Common myeloid progenitor, CD34-positive (primary cell): ENCODE measurements at regions of chr19 and their contacts with region 1.

Region 1: DNA sequence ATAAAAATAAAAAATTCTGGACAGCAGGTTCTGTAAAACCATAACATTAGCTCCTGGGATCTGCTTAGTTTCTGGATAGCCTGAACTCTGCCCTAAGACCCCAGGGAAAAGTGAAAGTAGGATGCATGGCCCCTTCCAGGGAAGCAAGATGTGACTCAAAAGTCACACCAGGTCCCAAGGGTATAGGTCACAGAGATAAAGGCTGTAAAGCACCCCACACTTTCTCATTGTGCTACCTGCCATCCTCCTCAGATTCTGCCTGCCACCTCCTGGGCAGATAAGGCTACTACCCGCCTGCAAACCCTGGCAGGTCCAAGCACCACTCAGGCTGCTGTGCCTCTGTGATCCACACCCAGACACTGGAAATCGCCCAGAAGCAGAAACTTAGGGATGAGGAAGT is 20.6 kb downstream of the FFAR2 start:
- DNase-seq: peak; percentile 74 to 84 (median 78)
- H3K4me3 ChIP-seq: no peak overlapping the region
- H3K27ac ChIP-seq: no peak overlapping the region
- H3K4me1 ChIP-seq: peaks cover 0 to 9% (median 2%) of the 10 kb centered on the region in 4 experiments
- H3K27me3 ChIP-seq: no peaks in the 10 kb centered on the region

Region 2: DNA sequence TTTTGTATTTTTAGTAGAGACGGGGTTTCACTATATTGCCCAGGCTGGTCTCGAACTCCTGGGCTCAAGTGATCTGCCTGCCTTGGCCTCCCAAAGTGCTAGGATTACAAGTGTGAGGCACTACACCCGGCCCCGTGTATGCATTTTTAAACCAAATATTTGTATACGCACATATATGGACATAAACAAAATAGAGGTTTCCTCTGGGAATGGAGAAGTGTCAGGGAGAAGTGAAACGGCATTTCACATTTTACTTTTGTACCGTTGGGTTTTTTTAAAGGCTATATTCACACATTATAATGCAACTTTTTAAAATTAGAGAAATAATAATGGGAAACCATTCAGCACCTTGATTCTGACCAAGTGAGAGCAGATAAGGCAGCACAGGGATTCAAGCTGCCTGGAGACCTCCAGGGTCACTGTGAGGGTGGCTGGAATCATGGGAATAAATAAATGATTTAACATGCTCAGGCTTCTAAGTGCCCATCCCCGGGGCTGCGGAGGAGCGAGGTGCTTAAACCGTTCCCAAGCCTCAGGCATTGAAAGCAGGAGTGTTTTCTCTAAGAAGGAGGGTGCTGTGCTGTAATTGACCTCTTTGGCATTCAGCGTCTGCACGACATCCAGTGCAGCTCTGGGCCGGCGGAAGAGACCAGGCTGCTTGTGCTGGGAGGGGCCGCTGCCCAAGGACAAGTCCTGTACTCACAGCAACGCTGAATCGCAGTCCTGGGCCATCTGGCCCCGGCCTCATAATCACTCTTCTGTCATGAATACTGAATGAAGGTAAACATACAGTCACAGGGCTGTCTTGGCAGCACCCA is 73.0 kb before region 1 on chr19:
- CTCF ChIA-PET with region 1: no interaction called
- POLR2A ChIA-PET with region 1: no interaction called
- DNase-seq: no peak
- H3K4me3 ChIP-seq: no peak overlapping the region
- H3K27ac ChIP-seq: no peak overlapping the region
- H3K4me1 ChIP-seq: peaks cover 0 to 10% (median 7%) of the 10 kb centered on the region in 4 experiments
- H3K27me3 ChIP-seq: no peaks in the 10 kb centered on the region

Region 3: DNA sequence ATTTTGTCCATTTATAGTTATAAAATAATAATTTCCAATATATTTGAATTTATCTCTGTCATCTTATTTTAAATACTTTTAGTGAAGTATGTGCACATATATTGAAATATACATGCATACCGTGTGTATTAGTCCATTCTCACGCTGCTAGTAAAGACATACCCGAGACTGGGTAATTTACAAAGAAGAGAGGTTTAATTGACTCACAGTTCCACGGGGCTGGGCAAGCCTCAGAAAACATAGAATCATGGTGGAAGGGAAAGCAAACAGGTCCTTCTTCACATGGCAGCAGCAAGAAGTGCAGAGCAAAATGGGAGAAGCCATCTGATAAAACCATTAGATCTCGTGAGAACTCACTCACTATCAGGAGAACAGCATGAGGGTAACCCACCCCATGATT is 58.1 kb before region 1 on chr19:
- CTCF ChIA-PET with region 1: no interaction called
- POLR2A ChIA-PET with region 1: no interaction called
- DNase-seq: no peak
- H3K4me3 ChIP-seq: no peak overlapping the region
- H3K27ac ChIP-seq: no peak overlapping the region
- H3K4me1 ChIP-seq: no peaks in the 10 kb centered on the region
- H3K27me3 ChIP-seq: peaks cover 0 to 2% (median 0%) of the 10 kb centered on the region in 5 experiments

Region 4: GRCh38 chr19:35421362-35421761 is 47.3 kb before region 1 on chr19:
- CTCF ChIA-PET with region 1: interaction called, 29 read pairs
- POLR2A ChIA-PET with region 1: no interaction called
- DNase-seq: no peak
- H3K4me3 ChIP-seq: no peak overlapping the region
- H3K27ac ChIP-seq: no peak overlapping the region
- H3K4me1 ChIP-seq: peaks cover 0 to 5% (median 2%) of the 10 kb centered on the region in 4 experiments
- H3K27me3 ChIP-seq: peaks cover 0 to 10% (median 0%) of the 10 kb centered on the region in 5 experiments

Region 5: DNA sequence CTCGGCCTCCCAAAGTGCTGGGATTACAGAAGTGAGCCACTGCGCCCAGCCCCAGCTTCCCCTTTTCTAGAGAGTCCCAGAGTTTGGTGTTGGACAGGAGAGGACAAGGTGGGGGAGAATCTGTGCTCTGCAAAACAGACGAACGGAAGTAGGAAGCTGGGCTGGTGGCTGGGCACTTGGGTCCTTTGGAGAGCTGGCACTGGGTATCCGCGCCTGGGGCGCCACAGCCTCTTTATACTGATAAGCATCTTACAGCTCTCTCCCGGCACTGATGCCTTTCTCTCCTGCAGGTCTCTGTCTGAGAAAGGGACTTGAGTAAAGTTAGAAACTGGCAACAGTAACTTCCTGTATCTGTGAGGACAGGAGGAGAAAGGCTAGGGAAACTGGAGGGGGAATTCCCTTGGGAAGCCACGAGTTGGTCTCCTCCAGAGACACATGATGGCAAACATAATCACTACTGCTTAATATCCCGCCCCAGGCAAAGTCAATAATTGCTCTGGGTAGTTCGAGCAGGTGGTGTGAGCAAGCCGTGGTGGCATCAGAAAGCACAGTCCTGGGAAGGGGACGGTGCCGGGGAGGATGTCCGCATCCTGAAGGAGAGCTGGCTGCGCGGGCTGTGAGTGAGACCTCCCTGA is 19.5 kb before region 1 on chr19:
- CTCF ChIA-PET with region 1: interaction called, 10 read pairs
- POLR2A ChIA-PET with region 1: no interaction called
- DNase-seq: peak; percentile 25 to 70 (median 70)
- H3K4me3 ChIP-seq: peak overlapping the region in 3 of 7 experiments; percentile 8 to 57 (median 38)
- H3K27ac ChIP-seq: no peak overlapping the region
- H3K4me1 ChIP-seq: peaks cover 13 to 54% (median 38%) of the 10 kb centered on the region in 4 experiments
- H3K27me3 ChIP-seq: no peaks in the 10 kb centered on the region

Region 6: DNA sequence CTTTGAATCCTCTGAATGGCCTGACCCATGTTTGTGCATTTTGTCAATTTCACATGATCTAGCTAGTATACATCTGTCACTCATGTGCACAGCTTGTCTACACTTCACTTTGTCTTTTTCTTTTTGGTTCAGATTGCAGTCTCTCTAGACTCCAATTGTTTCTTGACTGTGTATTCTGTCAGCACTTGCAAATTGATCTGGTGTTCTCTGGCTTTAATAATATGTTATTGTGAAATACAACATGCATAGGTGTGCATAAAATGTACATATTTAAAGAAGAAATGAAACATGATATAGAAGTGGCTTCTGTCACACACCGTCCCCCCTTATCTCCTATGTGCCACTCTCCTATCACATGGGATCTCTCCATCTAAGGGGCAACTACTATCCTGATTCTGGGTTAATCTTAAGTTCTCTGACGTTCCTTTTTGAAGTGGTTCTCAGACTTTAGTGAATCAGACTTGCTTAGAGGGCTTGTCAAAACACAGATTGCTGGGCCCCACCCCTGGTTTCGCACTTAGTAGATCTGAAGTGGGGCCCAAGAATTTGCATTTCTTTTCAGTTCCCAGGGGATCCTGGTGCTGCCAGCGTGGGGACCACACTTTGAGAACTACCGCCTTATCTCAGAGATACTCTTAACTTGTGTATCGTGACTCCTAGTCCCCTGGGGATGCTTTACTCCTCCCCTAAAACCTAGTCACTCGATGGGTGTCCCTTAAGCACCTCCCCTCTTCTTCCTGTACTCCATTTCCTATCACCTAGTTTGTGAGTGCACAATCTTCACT is 15.8 kb after region 1 on chr19:
- CTCF ChIA-PET with region 1: interaction called, 10 read pairs
- POLR2A ChIA-PET with region 1: no interaction called
- DNase-seq: peak in 1 of 3 donors; percentile 13
- H3K4me3 ChIP-seq: no peak overlapping the region
- H3K27ac ChIP-seq: no peak overlapping the region
- H3K4me1 ChIP-seq: peaks cover 0 to 2% (median 0%) of the 10 kb centered on the region in 4 experiments
- H3K27me3 ChIP-seq: peaks cover 0 to 9% (median 0%) of the 10 kb centered on the region in 5 experiments

Region 7: GRCh38 chr19:35495107-35496064 is 26.7 kb after region 1 on chr19:
- CTCF ChIA-PET with region 1: interaction called, 10 read pairs
- POLR2A ChIA-PET with region 1: no interaction called
- DNase-seq: peak; percentile 59 to 76 (median 76)
- H3K4me3 ChIP-seq: peak overlapping the region in 2 of 7 experiments; percentile 46 to 55
- H3K27ac ChIP-seq: no peak overlapping the region
- H3K4me1 ChIP-seq: peaks cover 0 to 4% (median 2%) of the 10 kb centered on the region in 4 experiments
- H3K27me3 ChIP-seq: peaks cover 0 to 5% (median 0%) of the 10 kb centered on the region in 5 experiments

Region 8: DNA sequence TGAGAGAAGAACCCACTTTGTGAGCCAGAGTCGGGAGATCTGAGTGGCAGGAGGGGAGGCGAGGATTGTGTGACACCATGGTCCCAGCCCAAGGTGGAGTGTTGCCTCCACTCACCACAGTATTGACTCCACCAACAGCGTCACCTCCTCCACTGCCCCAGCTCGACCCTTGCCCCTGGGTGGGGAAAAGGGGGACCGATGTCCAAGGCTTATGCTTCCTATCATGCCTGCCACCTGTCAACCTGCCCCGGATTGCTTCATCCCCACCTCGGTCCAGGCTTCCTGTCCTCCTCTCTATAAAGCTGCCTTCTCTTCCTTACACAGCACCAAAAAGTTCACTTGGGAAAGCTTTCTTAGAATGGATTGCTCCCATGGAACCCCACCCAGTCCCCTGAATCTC is 37.4 kb after region 1 on chr19:
- CTCF ChIA-PET with region 1: no interaction called
- POLR2A ChIA-PET with region 1: no interaction called
- DNase-seq: no peak
- H3K4me3 ChIP-seq: no peak overlapping the region
- H3K27ac ChIP-seq: no peak overlapping the region
- H3K4me1 ChIP-seq: peaks cover 0 to 18% (median 15%) of the 10 kb centered on the region in 4 experiments
- H3K27me3 ChIP-seq: peaks cover 4 to 37% (median 23%) of the 10 kb centered on the region in 5 experiments

Region 9: DNA sequence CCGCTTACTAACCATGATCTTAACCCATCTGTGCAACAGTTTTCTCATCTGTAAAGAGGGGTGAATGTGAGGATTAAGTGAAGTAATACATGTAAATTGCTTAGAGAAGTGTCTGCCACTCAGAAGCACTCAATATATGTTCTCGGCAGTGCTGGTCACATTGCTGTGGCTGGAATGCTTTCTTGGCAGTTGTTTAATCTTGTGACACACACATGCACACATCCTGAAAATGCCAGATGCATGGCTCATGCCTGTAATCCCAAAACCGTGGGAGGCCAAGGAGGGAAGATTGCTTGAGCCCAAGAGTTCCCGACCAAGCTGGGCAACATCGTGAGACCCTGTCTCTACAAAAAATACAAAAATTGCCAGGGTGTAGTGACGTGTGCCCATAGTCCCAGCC is 49.7 kb after region 1 on chr19:
- CTCF ChIA-PET with region 1: no interaction called
- POLR2A ChIA-PET with region 1: no interaction called
- DNase-seq: no peak
- H3K4me3 ChIP-seq: no peak overlapping the region
- H3K27ac ChIP-seq: no peak overlapping the region
- H3K4me1 ChIP-seq: peaks cover 0 to 2% (median 0%) of the 10 kb centered on the region in 4 experiments
- H3K27me3 ChIP-seq: peaks cover 0 to 11% (median 3%) of the 10 kb centered on the region in 5 experiments